ENCODE measurements at regions of chr20 and their contacts with region 1.

Region 1: DNA sequence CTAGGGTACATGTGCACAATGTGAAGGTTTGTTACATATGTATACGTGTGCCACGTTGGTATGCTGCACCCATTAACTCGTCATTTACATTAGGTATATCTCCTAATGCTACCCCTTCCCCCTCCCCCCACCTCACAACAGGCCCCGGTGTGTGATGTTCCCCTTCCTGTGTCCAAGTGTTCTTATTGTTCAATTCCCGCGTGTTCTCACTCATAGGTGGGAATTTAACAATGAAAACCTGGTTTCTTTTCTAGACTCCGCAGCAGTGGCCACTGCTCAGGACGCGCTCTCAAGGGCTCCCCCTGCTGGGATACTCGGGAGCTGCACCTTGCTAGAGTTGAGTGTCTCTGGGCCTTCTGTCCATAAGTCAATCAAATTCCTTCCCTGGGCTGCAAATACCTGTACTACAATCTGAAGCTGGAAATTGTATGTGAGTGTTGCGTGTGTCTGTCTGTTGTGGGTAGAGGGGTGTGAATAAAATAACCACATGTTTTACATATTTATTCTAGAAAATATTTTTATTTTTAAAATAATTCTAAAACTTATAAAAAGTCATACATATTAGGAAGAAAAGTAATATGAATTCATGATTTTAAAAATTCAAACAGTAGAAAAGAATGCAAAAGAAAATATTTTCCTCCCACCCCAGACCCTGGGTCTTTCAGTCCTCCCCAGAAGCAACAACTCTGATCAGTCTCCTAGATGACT is 8.2 kb upstream of the CEP250 start:
- DNase-seq: peak; percentile 68 to 91 (median 86)
- H3K4me3 ChIP-seq: peak overlapping the region in 54 of 59 donors; percentile 8 to 61 (median 39)
- H3K27ac ChIP-seq: no peak overlapping the region
- H3K27me3 ChIP-seq: peaks cover 0 to 4% (median 0%) of the 10 kb centered on the region in 45 donors
- CTCF ChIP-seq: peak; percentile 69 to 96 (median 90)

Region 2: DNA sequence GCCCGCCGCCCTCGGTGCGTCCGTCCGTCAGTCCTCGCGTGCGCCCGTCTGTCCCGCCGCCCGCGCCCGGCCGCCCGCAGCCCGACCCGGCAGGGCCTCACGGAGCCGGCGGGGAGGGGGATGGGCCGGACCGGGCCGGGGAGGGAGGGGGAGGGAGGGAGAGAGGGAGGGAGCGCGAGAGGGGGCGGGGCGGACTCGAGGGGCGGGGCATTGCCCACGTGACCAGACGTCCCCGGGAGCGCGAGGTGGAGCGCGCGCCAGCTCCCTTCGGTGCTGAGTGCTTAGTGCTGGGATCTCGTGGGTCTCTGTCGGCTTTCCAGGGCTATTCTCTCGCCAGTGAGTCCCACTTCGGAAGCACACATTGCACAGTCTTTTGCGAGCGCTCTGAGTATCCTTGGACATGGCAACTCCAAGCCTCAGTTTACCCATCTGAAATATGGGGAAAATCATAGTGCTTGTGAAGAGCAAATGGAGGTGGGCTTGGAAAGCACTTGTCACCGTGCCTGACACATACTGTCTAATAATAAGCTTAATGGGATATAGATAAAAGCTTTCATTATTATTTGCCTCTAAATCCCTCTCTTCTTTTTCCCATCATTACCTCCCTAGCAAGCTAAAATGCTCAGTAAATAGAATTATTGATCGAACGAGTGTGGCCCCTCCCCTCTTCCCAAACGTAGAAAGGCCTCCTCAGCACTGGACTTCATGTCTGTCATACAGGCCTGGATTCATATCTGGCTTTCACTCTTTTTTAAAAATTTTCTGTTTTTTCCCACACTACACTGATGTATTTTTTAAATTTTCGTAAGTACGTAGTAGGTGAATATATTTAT is 621.5 kb before region 1 on chr20 and contains the start of gene NCOA6:
- intact Hi-C with region 1: loop called in 1 of 2 experiments (anchors 10 kb)
- DNase-seq: peak; percentile 81 to 92 (median 86)
- H3K4me3 ChIP-seq: peak within 1 kb of the TSS; percentile 65 to 93 (median 83)
- H3K27ac ChIP-seq: peak within 1 kb of the TSS; percentile 71 to 98 (median 91)
- H3K27me3 ChIP-seq: no peaks in the 10 kb centered on the region
- CTCF ChIP-seq: peak in 14 of 56 donors; percentile 11 to 40 (median 18)
- total RNA-seq, gene NCOA6: 29.3 to 53.5 (median 39.1) TPM